ENCODE measurements at regions of chr11 and their contacts with region 1.

Region 1: GRCh38 chr11:78000193-78000592 is 5.7 kb upstream of the INTS4 start:
- DNase-seq: peak; percentile 66
- ATAC-seq: peak; percentile 93
- H3K4me3 Mint-ChIP-seq: no peak overlapping the region
- H3K27ac Mint-ChIP-seq: no peak overlapping the region
- H3K4me1 Mint-ChIP-seq: peaks cover 2% of the 10 kb centered on the region
- H3K27me3 Mint-ChIP-seq: peaks cover 2% of the 10 kb centered on the region
- CTCF ChIP-seq: peak; percentile 75

Region 2: DNA sequence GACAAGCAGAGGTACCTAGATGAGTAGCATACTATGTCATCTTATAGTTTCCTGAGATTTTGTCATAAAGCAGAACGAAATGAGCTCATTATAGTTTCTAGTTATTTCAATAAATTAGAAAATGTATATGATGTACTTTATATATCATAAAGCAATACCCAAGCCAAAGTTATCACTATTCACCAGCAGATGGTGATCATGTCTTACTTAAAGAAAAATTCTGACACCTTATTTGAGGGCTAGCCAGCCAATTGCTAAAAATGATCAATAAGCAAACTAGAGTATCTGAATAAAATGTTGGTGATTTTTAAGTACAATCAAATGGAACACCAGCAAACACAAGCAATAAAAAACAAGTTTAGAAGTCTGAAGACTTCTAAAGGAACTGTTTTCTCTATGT is 223.7 kb before region 1 on chr11:
- CTCF ChIA-PET with region 1: interaction called, 4 read pairs
- POLR2A ChIA-PET with region 1: interaction called, 3 read pairs
- intact Hi-C with region 1: loop called (anchors 2 kb)
- DNase-seq: no peak
- ATAC-seq: peak; percentile 64
- H3K4me3 Mint-ChIP-seq: no peak overlapping the region
- H3K27ac Mint-ChIP-seq: no peak overlapping the region
- H3K4me1 Mint-ChIP-seq: peaks cover 44% of the 10 kb centered on the region
- H3K27me3 Mint-ChIP-seq: no peaks in the 10 kb centered on the region
- CTCF ChIP-seq: peak; percentile 55

Region 3: GRCh38 chr11:78039919-78040671 is 39.9 kb after region 1 on chr11:
- CTCF ChIA-PET with region 1: interaction called, 40 read pairs
- POLR2A ChIA-PET with region 1: interaction called, 5 read pairs
- intact Hi-C with region 1: no loop called
- DNase-seq: peak; percentile 74
- ATAC-seq: peak; percentile 82
- H3K4me3 Mint-ChIP-seq: peak overlapping the region; percentile 39
- H3K27ac Mint-ChIP-seq: peak overlapping the region; percentile 93
- H3K4me1 Mint-ChIP-seq: peaks cover 17% of the 10 kb centered on the region
- H3K27me3 Mint-ChIP-seq: no peaks in the 10 kb centered on the region
- CTCF ChIP-seq: no peak

Region 4: DNA sequence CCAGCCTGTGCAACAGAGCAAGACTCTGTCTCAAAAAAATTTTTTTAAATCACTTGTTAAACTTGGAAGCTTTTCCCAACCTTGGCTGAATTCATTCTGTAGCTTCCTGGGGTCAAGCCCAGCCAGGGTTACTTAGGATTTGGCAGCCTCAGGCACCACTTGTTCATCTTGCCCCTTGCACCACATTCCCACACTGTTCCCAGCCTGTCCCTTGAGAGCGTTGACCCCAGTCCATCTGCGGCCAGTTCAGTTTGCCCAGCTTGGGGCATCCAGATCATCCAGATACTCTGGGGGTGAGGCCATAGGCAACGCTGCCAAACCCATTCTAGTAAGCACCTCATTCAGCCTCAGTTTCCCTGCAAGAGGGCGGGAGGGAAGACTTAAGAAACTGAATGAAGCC is 54.8 kb after region 1 on chr11:
- CTCF ChIA-PET with region 1: no interaction called
- POLR2A ChIA-PET with region 1: no interaction called
- intact Hi-C with region 1: no loop called
- DNase-seq: no peak
- ATAC-seq: no peak
- H3K4me3 Mint-ChIP-seq: no peak overlapping the region
- H3K27ac Mint-ChIP-seq: no peak overlapping the region
- H3K4me1 Mint-ChIP-seq: peaks cover 7% of the 10 kb centered on the region
- H3K27me3 Mint-ChIP-seq: no peaks in the 10 kb centered on the region
- CTCF ChIP-seq: no peak

Measured in activated CD8-positive, alpha-beta T cell treated with anti-CD3 and anti-CD28 coated beads for 36 hours (primary cell).